ENCODE measurements at regions of chr16 and their contacts with region 1.

Region 1: DNA sequence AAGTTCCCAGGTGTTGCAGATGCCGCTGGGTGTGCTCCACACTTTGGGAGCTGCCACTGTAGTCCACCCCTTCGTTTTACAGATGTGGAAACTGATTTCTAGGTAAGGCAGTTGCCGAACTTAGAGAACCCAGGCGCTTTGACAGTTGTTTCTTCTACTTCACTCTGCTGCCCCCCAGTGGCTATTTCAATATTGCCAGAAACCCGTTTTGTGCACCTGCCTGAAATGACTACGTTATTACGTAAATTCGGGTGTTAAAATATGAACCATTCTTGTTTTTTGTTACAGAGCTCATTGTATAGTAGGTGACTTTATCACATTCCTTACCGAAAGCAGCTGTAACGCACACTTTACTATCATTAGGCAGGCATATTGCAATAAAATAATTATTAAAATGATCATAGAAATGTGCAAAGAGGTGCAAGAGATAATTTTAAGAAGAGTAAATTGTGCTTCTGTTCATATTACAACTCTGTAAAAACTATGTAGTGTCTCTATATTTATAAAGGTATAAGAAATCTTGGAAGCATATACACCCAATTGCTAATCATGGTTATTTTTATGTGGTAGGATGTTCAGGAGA is 44.9 kb downstream of the OTOA start:
- H3K4me3 ChIP-seq: no peak overlapping the region
- H3K27ac ChIP-seq: no peak overlapping the region
- H3K4me1 ChIP-seq: no peaks in the 10 kb centered on the region
- CTCF ChIP-seq: peak; percentile 50

Region 2: GRCh38 chr16:21698169-21699032 is 10.2 kb before region 1 on chr16:
- CTCF ChIA-PET with region 1: interaction called, 19 read pairs
- POLR2A ChIA-PET with region 1: interaction called, 3 read pairs
- H3K4me3 ChIP-seq: no peak overlapping the region
- H3K27ac ChIP-seq: no peak overlapping the region
- H3K4me1 ChIP-seq: no peaks in the 10 kb centered on the region
- CTCF ChIP-seq: no peak

Region 3: DNA sequence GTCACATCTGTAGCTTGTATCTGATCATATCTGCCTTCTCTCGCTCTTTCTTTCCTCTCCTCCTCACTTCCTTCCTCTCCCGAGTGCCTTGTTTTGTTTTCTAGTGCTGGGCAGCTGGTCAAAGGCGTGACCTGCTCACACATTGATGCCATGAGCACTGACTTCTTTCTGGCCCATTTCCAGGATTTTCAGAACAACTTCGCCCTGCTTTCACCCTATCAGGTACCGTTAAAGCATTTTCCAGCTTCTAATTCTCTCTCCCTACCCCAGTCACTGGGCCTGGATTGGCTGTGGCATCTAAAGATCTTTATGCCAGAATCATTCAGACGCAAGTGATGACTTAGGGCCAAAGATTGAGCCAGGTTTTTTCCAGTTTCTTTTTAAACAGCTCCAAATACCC is 10.7 kb after region 1 on chr16:
- CTCF ChIA-PET with region 1: interaction called, 16 read pairs
- POLR2A ChIA-PET with region 1: no interaction called
- H3K4me3 ChIP-seq: no peak overlapping the region
- H3K27ac ChIP-seq: no peak overlapping the region
- H3K4me1 ChIP-seq: no peaks in the 10 kb centered on the region
- CTCF ChIP-seq: no peak

Region 4: GRCh38 chr16:22001591-22001990 is 293.0 kb after region 1 on chr16:
- CTCF ChIA-PET with region 1: no interaction called
- POLR2A ChIA-PET with region 1: no interaction called
- H3K4me3 ChIP-seq: no peak overlapping the region
- H3K27ac ChIP-seq: no peak overlapping the region
- H3K4me1 ChIP-seq: no peaks in the 10 kb centered on the region; the same call in 1 of the 2 replicates
- CTCF ChIP-seq: no peak

Region 5: DNA sequence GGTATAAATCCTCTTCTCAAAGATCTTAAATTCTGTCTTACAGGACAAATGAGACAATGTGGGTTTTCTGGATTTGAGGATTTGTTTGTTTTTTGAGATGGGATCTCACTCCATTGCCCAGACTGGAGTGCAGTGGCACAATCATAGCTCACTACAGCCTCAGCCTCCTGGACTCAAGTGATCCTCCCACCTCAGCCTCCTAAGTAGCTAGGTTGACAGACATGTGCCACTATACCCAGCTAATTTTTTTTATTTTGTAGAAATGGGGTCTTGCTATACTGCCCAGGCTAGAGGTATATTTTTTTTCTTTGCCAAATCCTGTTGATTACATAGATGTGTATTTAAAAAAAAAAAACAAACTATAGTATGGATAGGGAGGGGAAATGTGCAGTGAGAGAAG is 421.9 kb after region 1 on chr16:
- CTCF ChIA-PET with region 1: no interaction called
- POLR2A ChIA-PET with region 1: no interaction called
- H3K4me3 ChIP-seq: no peak overlapping the region
- H3K27ac ChIP-seq: no peak overlapping the region
- H3K4me1 ChIP-seq: no peaks in the 10 kb centered on the region
- CTCF ChIP-seq: no peak

Measured in HEK293 (cell line).